GM12878 (cell line): ENCODE measurements at regions of chr15 and their contacts with region 1.

Region 1: DNA sequence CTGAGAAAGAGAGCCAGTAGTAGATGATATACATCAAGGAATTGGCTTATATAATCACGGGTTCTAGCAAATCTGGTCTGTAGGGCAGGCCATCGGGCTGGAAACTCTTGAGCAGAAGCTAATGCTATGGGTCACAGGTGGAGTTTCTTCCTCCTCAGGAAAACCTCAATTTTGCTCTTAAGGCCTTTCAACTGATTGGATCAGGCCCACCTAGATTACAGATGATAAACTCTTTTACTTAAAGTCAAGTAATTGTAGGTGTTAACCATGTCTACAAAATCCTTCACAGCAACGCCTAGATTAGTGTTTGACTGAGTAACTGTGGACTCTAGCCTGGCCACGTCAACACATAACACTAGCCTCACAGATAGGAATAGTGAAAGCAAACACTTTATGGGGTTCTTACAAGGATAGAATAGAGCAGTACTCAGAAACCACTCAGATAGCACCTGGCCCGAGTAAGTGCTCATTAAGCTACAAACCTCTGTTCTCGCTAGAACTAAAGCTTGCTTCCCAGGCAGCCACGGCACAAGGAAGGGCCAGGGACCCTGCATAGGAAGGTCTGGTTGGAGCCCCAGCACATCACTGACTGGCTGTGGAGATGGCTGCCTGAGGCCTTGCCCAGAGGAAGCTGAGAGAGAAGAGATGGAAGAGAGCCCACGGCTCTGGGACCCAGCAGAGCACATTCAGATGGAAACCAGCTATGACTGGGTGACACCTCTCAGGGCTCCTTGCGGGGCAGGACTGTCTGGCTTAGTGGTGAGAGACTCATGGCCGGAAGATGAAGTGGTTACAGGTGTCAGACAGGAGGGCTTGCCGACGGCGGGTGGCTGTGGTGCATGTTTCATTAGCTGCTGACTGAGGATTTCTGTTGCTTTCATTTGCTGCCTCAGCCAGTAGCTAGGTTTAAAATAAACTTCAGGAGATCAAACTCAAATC is 202.5 kb upstream of the TLE3 start:
- DNase-seq: peak; percentile 78
- ATAC-seq: peak; percentile 99
- H3K4me3 ChIP-seq: no peak overlapping the region
- H3K27ac ChIP-seq: no peak overlapping the region; the same call in 1 of the 2 replicates
- H3K4me1 ChIP-seq: peaks cover 19% of the 10 kb centered on the region
- H3K27me3 ChIP-seq: no peaks in the 10 kb centered on the region; a peak in 1 of 4 replicates
- CTCF ChIP-seq: no peak
- EP300 ChIP-seq: peak; percentile 39 to 72; a peak in 2 of 4 replicates
- POLR2A ChIP-seq: no peak
- RAD21 ChIP-seq: no peak

Region 2: DNA sequence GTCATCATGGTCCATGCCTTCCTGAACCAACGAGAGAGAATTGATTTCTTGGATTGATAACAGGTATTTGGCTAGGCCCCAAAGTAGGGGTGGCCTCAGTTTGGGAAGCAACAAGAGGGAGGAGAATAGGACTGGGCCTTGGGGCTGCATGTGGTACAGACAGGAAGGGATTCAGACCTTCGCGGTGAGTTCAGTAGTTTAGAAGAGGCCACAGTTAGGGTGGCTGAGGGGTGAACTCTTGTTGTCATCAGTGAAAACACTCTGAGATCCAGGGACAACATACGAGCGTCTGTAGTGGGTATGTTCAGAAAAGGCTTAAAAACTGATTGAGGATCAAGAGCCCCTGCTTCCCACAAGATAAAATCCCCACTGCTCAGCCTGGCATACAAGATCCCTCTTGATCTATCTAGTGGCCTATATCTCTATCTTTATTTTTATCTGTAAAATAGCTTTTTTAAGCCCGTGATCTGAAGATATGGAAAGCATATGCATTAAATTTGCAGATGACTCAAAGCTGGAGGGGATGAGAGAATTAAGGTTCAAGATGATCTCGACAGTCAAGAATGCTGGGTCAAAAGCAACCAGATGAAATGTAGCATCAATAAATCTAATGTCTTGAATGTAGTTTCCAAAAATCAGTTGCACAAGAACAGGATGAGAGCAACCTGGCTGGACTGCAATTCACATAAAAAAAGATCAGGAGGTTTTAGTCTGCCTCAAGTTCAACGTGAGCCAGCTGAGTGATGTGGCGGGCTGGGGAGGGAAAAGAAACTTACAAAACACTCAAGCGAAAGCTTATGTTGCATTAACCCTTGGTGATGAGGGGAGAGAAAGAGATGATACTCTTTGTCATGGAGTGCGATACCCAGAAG is 18.6 kb after region 1 on chr15:
- CTCF ChIA-PET with region 1: interaction called, 5 read pairs
- POLR2A ChIA-PET with region 1: interaction called, 4 read pairs
- RAD21 ChIA-PET with region 1: interaction called, 10 read pairs
- SMC1A ChIA-PET with region 1: interaction called, 6 read pairs
- in situ Hi-C with region 1: no loop called
- intact Hi-C with region 1: loop called (anchors 2 kb)
- DNase-seq: no peak
- ATAC-seq: peak; percentile 40; the same call in 2 of the 3 replicates
- H3K4me3 ChIP-seq: peak overlapping the region; percentile 9; the same call in 1 of the 2 replicates
- H3K27ac ChIP-seq: peak overlapping the region; percentile 48
- H3K4me1 ChIP-seq: peaks cover 44% of the 10 kb centered on the region
- H3K27me3 ChIP-seq: no peaks in the 10 kb centered on the region
- CTCF ChIP-seq: no peak
- EP300 ChIP-seq: no peak
- POLR2A ChIP-seq: no peak
- RAD21 ChIP-seq: no peak